ENCODE measurements at regions of chr18 and their contacts with region 1.

Region 1: DNA sequence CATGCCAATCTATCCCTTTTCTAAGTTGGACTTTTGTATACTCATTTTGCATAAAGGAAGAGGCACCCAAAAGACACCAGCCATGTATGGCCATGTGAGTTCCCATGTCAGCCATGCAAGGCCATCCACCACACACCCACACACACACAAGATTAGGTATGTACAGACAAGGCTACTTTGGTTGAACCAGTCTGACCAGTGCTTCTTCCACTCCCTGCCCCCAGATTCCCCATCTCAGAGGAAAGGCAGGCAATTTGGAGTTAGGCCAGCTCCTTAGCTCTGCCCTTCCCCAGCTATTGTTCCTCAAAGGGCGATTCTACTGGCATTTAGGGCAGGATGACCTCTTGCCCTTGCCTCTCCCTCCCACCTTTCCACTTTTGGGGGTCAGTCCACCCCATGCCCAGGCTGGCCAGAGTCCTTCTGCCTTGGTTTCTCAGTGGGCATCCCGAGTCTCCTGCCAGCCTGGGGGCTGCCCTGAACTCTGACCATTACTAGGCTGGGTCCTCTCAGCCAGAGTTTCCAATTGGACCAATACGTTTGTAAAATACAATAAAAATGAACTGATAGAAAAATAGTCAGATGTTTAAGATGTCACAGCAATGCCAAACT is 101.1 kb downstream of the ZBTB7C start:
- DNase-seq: peak; percentile 81
- H3K4me3 ChIP-seq: no peak overlapping the region
- H3K27ac ChIP-seq: no peak overlapping the region
- H3K4me1 ChIP-seq: peaks cover 22% of the 10 kb centered on the region
- H3K27me3 ChIP-seq: no peaks in the 10 kb centered on the region
- CTCF ChIP-seq: no peak

Region 2: GRCh38 chr18:48399303-48400075 is 91.4 kb after region 1 on chr18:
- CTCF ChIA-PET with region 1: no interaction called
- dilution Hi-C with region 1: loop called (anchors 5 kb)
- in situ Hi-C with region 1: no loop called
- intact Hi-C with region 1: no loop called
- DNase-seq: no peak
- H3K4me3 ChIP-seq: no peak overlapping the region
- H3K27ac ChIP-seq: no peak overlapping the region
- H3K4me1 ChIP-seq: peaks cover 27% of the 10 kb centered on the region
- H3K27me3 ChIP-seq: no peaks in the 10 kb centered on the region
- CTCF ChIP-seq: no peak